Activated CD8-positive, alpha-beta T cell treated with anti-CD3 and anti-CD28 coated beads, Interleukin-2, amount 10 ng/mL, durations not matched to agents 7 days and 5 days (primary cell): ENCODE measurements at regions of chr16 and their contacts with region 1.

Region 1: GRCh38 chr16:30075507-30076275 is at the start of gene PPP4C:
- DNase-seq: peak; percentile 95
- ATAC-seq: peak; percentile 85
- H3K4me3 Mint-ChIP-seq: peak within 1 kb of the TSS; percentile 93
- H3K27ac Mint-ChIP-seq: peak within 1 kb of the TSS; percentile 98
- H3K4me1 Mint-ChIP-seq: peaks cover 42% of the 10 kb centered on the region
- H3K27me3 Mint-ChIP-seq: no peaks in the 10 kb centered on the region
- total RNA-seq, gene PPP4C: 157 TPM

Region 2: DNA sequence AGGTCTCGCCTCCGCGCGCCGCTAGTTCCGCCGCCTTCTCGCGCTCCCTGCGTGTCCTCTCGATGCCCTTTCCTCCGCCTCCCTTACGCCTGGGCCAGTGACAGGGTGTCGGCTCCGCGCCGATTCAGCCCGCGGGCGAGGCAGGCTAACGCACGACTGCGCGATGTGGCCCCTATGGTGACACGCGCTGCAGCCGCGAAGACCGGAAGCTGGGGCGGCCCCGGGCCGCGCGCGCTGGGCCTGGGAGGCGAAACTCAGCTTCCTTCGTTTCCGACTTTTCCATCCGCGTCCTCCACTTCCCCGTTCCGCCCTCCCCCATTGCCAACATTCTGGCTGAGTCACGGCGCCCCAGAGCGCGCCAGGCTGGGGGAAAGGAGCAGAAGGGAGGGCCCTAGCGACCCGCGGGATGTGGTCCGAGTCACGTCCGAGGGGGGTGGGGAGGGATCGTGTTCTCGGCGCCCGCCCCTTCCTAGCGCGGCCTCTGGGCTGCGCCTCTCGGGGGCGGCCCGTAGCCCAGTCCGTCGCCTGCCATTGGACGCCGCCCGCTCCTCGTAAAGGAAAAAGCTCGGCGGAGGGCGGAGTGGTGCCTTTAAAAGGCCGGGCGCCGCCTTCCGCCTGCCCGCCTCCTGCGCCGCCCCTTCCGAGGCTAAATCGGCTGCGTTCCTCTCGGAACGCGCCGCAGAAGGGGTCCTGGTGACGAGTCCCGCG is 10.4 kb before region 1 on chr16 and contains the start of gene ALDOA:
- CTCF ChIA-PET with region 1: interaction called, 8 read pairs
- POLR2A ChIA-PET with region 1: interaction called, 41 read pairs
- DNase-seq: peak; percentile 98
- ATAC-seq: peak; percentile 88
- H3K4me3 Mint-ChIP-seq: peak within 1 kb of the TSS; percentile 99
- H3K27ac Mint-ChIP-seq: peak within 1 kb of the TSS; percentile 98
- H3K4me1 Mint-ChIP-seq: peaks cover 44% of the 10 kb centered on the region
- H3K27me3 Mint-ChIP-seq: no peaks in the 10 kb centered on the region
- total RNA-seq, gene ALDOA: 1,738 to 1,843 TPM